ENCODE measurements at regions of chr15 and their contacts with region 1.

Region 1: GRCh38 chr15:89575146-89575655 is at the start of gene TICRR:
- DNase-seq: peak; percentile 96
- ATAC-seq: peak; percentile 99
- H3K4me3 Mint-ChIP-seq: peak within 1 kb of the TSS; percentile 89
- H3K27ac Mint-ChIP-seq: peak within 1 kb of the TSS; percentile 72
- H3K4me1 Mint-ChIP-seq: peaks cover 26% of the 10 kb centered on the region
- H3K27me3 Mint-ChIP-seq: peaks cover 5% of the 10 kb centered on the region
- total RNA-seq, gene TICRR: 25.7 to 28.9 TPM

Region 2: DNA sequence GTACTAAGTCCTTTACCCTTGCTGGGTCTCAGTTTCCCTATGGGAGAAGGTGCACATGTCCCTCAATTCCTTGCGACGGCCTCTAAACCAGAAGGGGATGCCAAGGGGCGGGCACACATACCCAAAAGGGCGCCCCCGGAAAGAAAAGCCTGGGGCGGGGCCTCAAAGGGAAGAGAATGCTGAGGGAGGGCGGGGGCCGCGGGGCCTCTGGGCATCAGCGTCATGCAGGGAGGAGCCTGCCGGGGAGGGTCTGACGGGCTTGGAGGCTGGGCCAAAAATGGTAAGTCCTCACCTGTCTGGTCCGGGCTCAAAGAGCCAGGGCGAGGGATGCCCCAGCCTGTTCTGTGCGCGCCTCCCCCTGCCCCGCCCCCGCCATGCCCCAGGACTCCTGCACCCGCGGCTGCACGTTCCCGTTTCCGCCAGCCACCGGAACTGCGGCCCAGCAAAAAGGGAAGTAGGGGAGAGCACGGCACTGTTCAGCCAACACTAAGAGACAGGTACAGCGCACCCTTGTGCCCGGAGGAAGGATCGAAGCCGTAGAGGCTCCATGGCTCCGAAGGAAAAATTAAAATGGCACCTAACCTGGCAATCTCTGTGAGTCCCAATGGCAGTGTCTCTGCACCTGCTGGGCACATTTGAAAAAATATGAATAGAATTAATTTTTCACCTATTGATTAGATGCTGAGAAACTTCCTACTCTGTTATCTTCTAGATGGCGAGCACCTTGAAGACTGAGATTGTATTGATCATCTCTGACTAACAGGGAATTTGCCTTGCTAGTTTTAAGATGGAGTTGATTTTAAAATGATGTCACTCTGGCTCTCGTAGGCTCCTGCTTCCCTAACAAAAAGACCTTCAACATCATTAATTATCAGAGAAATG is 1028.7 kb before region 1 on chr15 and contains the start of gene DET1:
- CTCF ChIA-PET with region 1: no interaction called
- POLR2A ChIA-PET with region 1: no interaction called
- intact Hi-C with region 1: loop called in 1 of 2 experiments (anchors 10 kb)
- DNase-seq: peak; percentile 98
- ATAC-seq: peak; percentile 97
- H3K4me3 Mint-ChIP-seq: peak within 1 kb of the TSS; percentile 83
- H3K27ac Mint-ChIP-seq: peak within 1 kb of the TSS; percentile 91
- H3K4me1 Mint-ChIP-seq: peaks cover 13% of the 10 kb centered on the region
- H3K27me3 Mint-ChIP-seq: no peaks in the 10 kb centered on the region
- total RNA-seq, gene DET1: 2.7 to 3.0 TPM

Region 3: GRCh38 chr15:89243691-89244471 is 331.3 kb before region 1 on chr15 and contains the start of gene FANCI:
- CTCF ChIA-PET with region 1: no interaction called
- POLR2A ChIA-PET with region 1: no interaction called
- intact Hi-C with region 1: loop called in 1 of 2 experiments (anchors 10 kb)
- DNase-seq: peak; percentile 98
- ATAC-seq: peak; percentile 96
- H3K4me3 Mint-ChIP-seq: peak within 1 kb of the TSS; percentile 93
- H3K27ac Mint-ChIP-seq: peak within 1 kb of the TSS; percentile 93
- H3K4me1 Mint-ChIP-seq: peaks cover 29% of the 10 kb centered on the region
- H3K27me3 Mint-ChIP-seq: no peaks in the 10 kb centered on the region
- total RNA-seq, gene FANCI: 150 to 199 TPM

Region 4: GRCh38 chr15:89591834-89592233 is 16.6 kb after region 1 on chr15:
- CTCF ChIA-PET with region 1: no interaction called
- POLR2A ChIA-PET with region 1: interaction called, 10 read pairs
- intact Hi-C with region 1: no loop called
- DNase-seq: no peak
- ATAC-seq: no peak
- H3K4me3 Mint-ChIP-seq: no peak overlapping the region
- H3K27ac Mint-ChIP-seq: no peak overlapping the region
- H3K4me1 Mint-ChIP-seq: no peaks in the 10 kb centered on the region
- H3K27me3 Mint-ChIP-seq: no peaks in the 10 kb centered on the region

Region 5: GRCh38 chr15:89630974-89631901 is 56.0 kb after region 1 on chr15:
- CTCF ChIA-PET with region 1: no interaction called
- POLR2A ChIA-PET with region 1: no interaction called
- intact Hi-C with region 1: no loop called
- DNase-seq: no peak
- ATAC-seq: peak; percentile 52
- H3K4me3 Mint-ChIP-seq: no peak overlapping the region
- H3K27ac Mint-ChIP-seq: no peak overlapping the region
- H3K4me1 Mint-ChIP-seq: no peaks in the 10 kb centered on the region
- H3K27me3 Mint-ChIP-seq: no peaks in the 10 kb centered on the region

Region 6: DNA sequence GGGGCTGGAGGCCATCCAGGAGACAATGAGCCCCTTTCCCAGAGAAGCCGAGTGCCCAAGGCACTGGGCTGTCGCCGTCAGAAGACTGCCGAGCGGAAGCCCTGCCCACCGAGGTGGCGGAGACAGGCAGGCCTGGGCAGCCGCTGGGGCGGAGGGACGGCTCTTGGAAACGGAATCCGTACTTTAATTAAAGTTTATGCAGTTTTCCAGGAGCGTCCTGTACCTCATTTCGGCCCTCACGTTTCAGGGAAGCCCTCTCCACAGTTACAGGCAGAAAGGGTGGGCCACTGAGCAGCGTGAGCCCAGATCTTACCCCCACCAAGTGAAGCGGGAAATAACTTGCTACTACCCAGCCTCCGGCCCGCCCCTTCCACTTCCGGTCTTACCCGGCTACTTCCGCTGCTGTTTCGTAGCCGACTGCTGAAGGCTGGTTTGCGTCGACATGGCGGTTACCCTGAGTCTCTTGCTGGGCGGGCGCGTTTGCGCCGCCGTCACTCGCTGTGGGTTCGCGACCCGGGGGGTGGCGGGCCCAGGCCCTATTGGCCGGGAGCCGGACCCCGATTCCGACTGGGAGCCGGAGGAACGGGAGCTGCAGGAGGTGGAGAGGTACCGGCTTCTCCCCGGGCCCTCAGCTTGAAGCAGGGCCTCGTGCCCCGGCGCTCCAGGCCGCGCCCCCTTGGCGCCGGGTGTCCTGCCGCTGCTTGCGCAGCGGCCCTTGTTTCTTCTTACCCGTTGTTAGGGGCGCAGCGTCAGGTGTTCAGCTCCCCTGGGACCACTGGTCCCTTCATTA is 690.3 kb after region 1 on chr15 and contains the start of gene NGRN:
- CTCF ChIA-PET with region 1: no interaction called
- POLR2A ChIA-PET with region 1: no interaction called
- intact Hi-C with region 1: loop called in 1 of 2 experiments (anchors 1 kb)
- DNase-seq: peak; percentile 95
- ATAC-seq: peak; percentile 87
- H3K4me3 Mint-ChIP-seq: peak within 1 kb of the TSS; percentile 98
- H3K27ac Mint-ChIP-seq: peak within 1 kb of the TSS; percentile 99
- H3K4me1 Mint-ChIP-seq: peaks cover 37% of the 10 kb centered on the region
- H3K27me3 Mint-ChIP-seq: no peaks in the 10 kb centered on the region
- total RNA-seq, gene NGRN: 22.0 to 23.9 TPM